Heart right ventricle (tissue), 16 donors: ENCODE measurements at regions of chr9 and their contacts with region 1.

Region 1: GRCh38 chr9:94952565-94953373 is 226.3 kb downstream of the AOPEP start:
- DNase-seq: peak in 1 of 2 donors; percentile 69
- ATAC-seq: peak; percentile 32 to 84 (median 70)
- H3K4me3 ChIP-seq: peak overlapping the region in 5 of 10 donors; percentile 6 to 20 (median 9)
- H3K27ac ChIP-seq: peak overlapping the region; percentile 33 to 92 (median 76)
- H3K4me1 ChIP-seq: peaks cover 7 to 59% (median 52%) of the 10 kb centered on the region in 9 donors
- H3K27me3 ChIP-seq: no peaks in the 10 kb centered on the region
- CTCF ChIP-seq: no peak

Region 2: GRCh38 chr9:94993064-94993833 is 40.5 kb after region 1 on chr9:
- intact Hi-C with region 1: loop called in 1 of 10 experiments (anchors 5 kb)
- DNase-seq: no peak
- ATAC-seq: no peak
- H3K4me3 ChIP-seq: no peak overlapping the region
- H3K27ac ChIP-seq: peak overlapping the region in 5 of 10 donors; percentile 1 to 36 (median 14)
- H3K4me1 ChIP-seq: peaks cover 10 to 41% (median 24%) of the 10 kb centered on the region in 9 donors
- H3K27me3 ChIP-seq: no peaks in the 10 kb centered on the region
- CTCF ChIP-seq: no peak